A673 (cell line): ENCODE measurements at regions of chrX and their contacts with region 1.

Region 1: DNA sequence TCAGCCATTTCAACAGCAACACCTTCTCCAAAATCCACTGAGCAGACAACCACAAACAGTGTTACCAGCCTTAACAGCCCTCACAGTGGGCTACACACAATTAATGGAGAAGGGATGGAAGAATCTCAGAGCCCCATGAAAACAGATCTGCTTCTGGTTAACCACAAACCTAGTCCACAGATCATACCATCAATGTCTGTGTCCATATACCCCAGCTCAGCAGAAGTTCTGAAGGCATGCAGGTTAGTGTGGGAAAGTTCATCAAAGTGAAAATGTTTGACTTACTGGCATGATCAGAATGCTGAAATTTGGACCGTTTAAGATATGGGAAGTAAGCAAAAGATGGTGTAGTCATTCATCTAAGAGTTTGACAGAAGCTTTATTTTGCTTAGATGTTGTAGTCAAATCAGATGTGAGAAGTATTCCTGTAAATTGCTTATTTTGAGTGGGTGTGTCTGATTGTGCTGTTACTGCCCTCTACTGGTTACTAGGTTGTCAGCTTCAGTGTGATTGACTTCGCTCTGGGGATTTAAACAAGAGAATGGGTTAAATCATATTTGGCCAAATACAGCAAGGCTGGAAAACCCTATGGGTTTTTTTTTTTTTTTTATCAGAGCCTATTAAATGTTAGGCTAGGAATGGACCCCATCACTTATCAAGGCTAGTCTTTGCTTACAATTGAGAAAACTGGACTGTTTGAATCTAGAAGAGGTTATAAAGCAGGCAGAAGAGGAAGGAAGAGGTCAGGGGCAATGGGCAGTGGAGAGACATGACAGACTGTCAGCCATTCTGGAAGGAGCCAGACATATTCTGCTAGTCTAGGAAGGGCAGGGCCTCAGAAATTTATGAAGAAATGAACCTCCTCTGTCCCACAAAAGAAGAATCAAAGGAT is 130.3 kb downstream of the DIPK2B start:
- DNase-seq: peak; percentile 77
- H3K4me3 ChIP-seq: no peak overlapping the region
- H3K27ac ChIP-seq: no peak overlapping the region
- H3K4me1 ChIP-seq: peaks cover 14% of the 10 kb centered on the region
- H3K27me3 ChIP-seq: no peaks in the 10 kb centered on the region
- CTCF ChIP-seq: peak; percentile 88

Region 2: GRCh38 chrX:45050558-45050957 is 19.8 kb before region 1 on chrX:
- CTCF ChIA-PET with region 1: no interaction called
- POLR2A ChIA-PET with region 1: interaction called, 11 read pairs
- intact Hi-C with region 1: no loop called
- DNase-seq: no peak
- H3K4me3 ChIP-seq: no peak overlapping the region
- H3K27ac ChIP-seq: no peak overlapping the region
- H3K4me1 ChIP-seq: peaks cover 6% of the 10 kb centered on the region
- H3K27me3 ChIP-seq: no peaks in the 10 kb centered on the region
- CTCF ChIP-seq: no peak

Region 3: DNA sequence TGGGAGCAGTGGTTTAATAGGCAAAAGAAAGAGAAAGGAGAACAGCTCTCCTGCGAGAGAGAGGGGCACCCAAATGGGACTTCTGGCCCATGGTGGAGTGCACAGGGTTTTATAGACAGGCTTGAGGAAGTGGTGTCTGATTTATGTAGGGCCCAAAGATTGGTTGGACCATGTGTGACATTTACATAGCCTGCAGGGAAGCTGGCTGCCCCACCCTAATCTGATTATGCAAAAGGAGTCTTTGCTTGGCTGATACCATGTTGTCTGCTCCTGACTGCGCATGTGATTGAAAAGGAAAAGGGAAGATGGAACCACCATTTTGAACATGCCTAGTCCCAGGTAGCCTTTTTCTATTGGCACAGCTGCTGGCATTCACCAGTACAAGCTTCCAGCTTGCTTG is 230.3 kb after region 1 on chrX:
- CTCF ChIA-PET with region 1: no interaction called
- POLR2A ChIA-PET with region 1: no interaction called
- intact Hi-C with region 1: no loop called
- DNase-seq: no peak
- H3K4me3 ChIP-seq: no peak overlapping the region
- H3K27ac ChIP-seq: no peak overlapping the region
- H3K4me1 ChIP-seq: no peaks in the 10 kb centered on the region
- H3K27me3 ChIP-seq: no peaks in the 10 kb centered on the region
- CTCF ChIP-seq: no peak

Region 4: GRCh38 chrX:45972636-45973035 is 902.3 kb after region 1 on chrX:
- CTCF ChIA-PET with region 1: no interaction called
- POLR2A ChIA-PET with region 1: no interaction called
- intact Hi-C with region 1: no loop called
- DNase-seq: no peak
- H3K4me3 ChIP-seq: no peak overlapping the region
- H3K27ac ChIP-seq: no peak overlapping the region
- H3K4me1 ChIP-seq: no peaks in the 10 kb centered on the region
- H3K27me3 ChIP-seq: no peaks in the 10 kb centered on the region
- CTCF ChIP-seq: no peak